ENCODE measurements at regions of chr5 and their contacts with region 1.

Region 1: GRCh38 chr5:151659001-151659754 is 27.5 kb downstream of the SPARC start:
- DNase-seq: peak; percentile 80
- ATAC-seq: peak; percentile 74
- H3K4me3 ChIP-seq: no peak overlapping the region
- H3K27ac ChIP-seq: peak overlapping the region; percentile 82
- H3K4me1 ChIP-seq: peaks cover 17% of the 10 kb centered on the region
- H3K27me3 ChIP-seq: no peaks in the 10 kb centered on the region
- CTCF ChIP-seq: peak; percentile 93
- POLR2A ChIP-seq: peak; percentile 51
- RAD21 ChIP-seq: peak; percentile 95

Region 2: GRCh38 chr5:151699071-151699901 is 40.1 kb after region 1 on chr5:
- CTCF ChIA-PET with region 1: no interaction called
- POLR2A ChIA-PET with region 1: interaction called, 11 read pairs
- dilution Hi-C with region 1: no loop called
- in situ Hi-C with region 1: no loop called
- intact Hi-C with region 1: no loop called
- DNase-seq: peak; percentile 99
- ATAC-seq: peak; percentile 84
- H3K4me3 ChIP-seq: no peak overlapping the region
- H3K27ac ChIP-seq: peak overlapping the region; percentile 92
- H3K4me1 ChIP-seq: peaks cover 35% of the 10 kb centered on the region
- H3K27me3 ChIP-seq: no peaks in the 10 kb centered on the region
- CTCF ChIP-seq: 0 out of 2 replicates have a peak, but pooled peaks have one; percentile 5
- POLR2A ChIP-seq: peak; percentile 78
- RAD21 ChIP-seq: peak; percentile 6; the same call in 1 of the 2 replicates

Region 3: GRCh38 chr5:151719228-151720000 is 60.2 kb after region 1 on chr5:
- CTCF ChIA-PET with region 1: interaction called, 10 read pairs
- POLR2A ChIA-PET with region 1: interaction called, 3 read pairs
- dilution Hi-C with region 1: no loop called
- in situ Hi-C with region 1: no loop called
- intact Hi-C with region 1: loop called (anchors 2 kb)
- DNase-seq: peak; percentile 50
- ATAC-seq: peak; percentile 56
- H3K4me3 ChIP-seq: no peak overlapping the region
- H3K27ac ChIP-seq: peak overlapping the region; percentile 88
- H3K4me1 ChIP-seq: peaks cover 16% of the 10 kb centered on the region
- H3K27me3 ChIP-seq: no peaks in the 10 kb centered on the region
- CTCF ChIP-seq: peak; percentile 64
- POLR2A ChIP-seq: no peak
- RAD21 ChIP-seq: peak; percentile 68

Measured in IMR-90 (cell line).